T-cell (primary cell): ENCODE measurements at regions of chr3 and their contacts with region 1.

Region 1: GRCh38 chr3:113002679-113003078 is 11.9 kb downstream of the GTPBP8 start:
- DNase-seq: peak in 25 of 35 experiments; percentile 16 to 60 (median 35)
- ATAC-seq: peak; percentile 40 to 76 (median 70)
- H3K4me3 ChIP-seq: no peak overlapping the region
- H3K4me3 Mint-ChIP-seq: peak overlapping the region in 1 of 3 donors; percentile 19
- H3K27ac ChIP-seq: peak overlapping the region; percentile 61
- H3K27ac Mint-ChIP-seq: peak overlapping the region; percentile 81 to 88
- H3K4me1 ChIP-seq: peaks cover 22 to 65% of the 10 kb centered on the region in 2 experiments
- H3K4me1 Mint-ChIP-seq: peaks cover 76 to 82% (median 79%) of the 10 kb centered on the region in 3 donors
- H3K27me3 ChIP-seq: no peaks in the 10 kb centered on the region
- H3K27me3 Mint-ChIP-seq: no peaks in the 10 kb centered on the region

Region 2: DNA sequence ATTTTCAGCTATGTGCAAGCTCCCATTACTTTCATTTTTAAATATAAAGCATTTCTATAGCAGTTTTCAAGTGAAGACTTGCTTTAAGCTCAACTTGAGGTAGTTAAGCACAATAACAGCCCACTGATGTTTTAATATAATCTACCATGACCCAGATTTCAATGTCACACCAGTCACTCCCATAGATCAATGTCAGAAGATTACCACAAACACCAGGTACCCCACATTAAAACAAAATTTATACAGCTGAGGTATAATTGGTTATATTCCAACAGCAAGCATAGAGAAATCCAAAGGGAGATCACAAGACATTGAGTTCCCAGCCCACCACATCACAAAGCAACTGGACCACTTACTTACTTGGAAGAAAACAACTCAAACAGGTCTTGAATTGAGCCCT is 10.9 kb after region 1 on chr3:
- CTCF ChIA-PET with region 1: interaction called in 1 of 2 experiments, 14 read pairs
- POLR2A ChIA-PET with region 1: interaction called, 9 to 21 read pairs
- DNase-seq: no peak
- ATAC-seq: peak in 1 of 4 experiments; percentile 38
- H3K4me3 ChIP-seq: no peak overlapping the region
- H3K4me3 Mint-ChIP-seq: peak overlapping the region in 2 of 3 donors; percentile 6 to 16
- H3K27ac ChIP-seq: peak overlapping the region; percentile 1
- H3K27ac Mint-ChIP-seq: peak overlapping the region; percentile 43 to 82
- H3K4me1 ChIP-seq: peaks cover 5 to 17% of the 10 kb centered on the region in 2 experiments
- H3K4me1 Mint-ChIP-seq: peaks cover 85 to 88% (median 87%) of the 10 kb centered on the region in 3 donors
- H3K27me3 ChIP-seq: no peaks in the 10 kb centered on the region
- H3K27me3 Mint-ChIP-seq: no peaks in the 10 kb centered on the region

Region 3: DNA sequence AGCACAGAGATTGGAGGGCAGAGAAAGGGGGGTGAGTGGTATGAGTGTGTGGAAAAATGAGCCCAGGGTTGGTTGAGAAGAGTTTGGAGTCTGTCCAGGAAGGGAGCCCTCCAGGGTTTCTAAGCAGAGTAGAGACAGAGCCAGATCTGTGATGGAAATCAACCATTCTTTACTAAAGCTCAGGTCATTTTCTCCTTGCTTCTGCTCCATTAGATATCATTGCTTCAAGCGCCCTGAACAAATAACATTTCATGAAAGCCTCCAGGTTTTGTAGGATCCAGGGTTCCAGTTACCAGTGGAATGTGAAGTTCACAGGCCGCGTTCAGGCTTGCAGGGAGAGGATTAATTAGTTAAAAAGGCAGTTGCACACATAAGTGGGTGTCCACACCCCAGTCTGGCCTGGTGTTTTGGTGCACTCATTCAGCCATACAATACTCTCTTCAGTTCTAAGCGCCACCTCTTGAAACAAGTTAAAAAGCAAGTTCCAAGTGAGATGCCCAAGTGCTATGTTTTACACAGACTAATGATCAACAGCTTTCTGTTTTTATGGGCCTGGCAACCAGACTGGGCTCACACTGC is 192.2 kb after region 1 on chr3:
- CTCF ChIA-PET with region 1: no interaction called
- POLR2A ChIA-PET with region 1: interaction called in 1 of 2 experiments, 11 read pairs
- DNase-seq: no peak
- ATAC-seq: no peak
- H3K4me3 ChIP-seq: no peak overlapping the region
- H3K4me3 Mint-ChIP-seq: no peak overlapping the region
- H3K27ac ChIP-seq: no peak overlapping the region
- H3K27ac Mint-ChIP-seq: no peak overlapping the region
- H3K4me1 ChIP-seq: no peaks in the 10 kb centered on the region
- H3K4me1 Mint-ChIP-seq: no peaks in the 10 kb centered on the region
- H3K27me3 ChIP-seq: no peaks in the 10 kb centered on the region
- H3K27me3 Mint-ChIP-seq: peaks cover 2 to 16% of the 10 kb centered on the region in 2 donors

Region 4: DNA sequence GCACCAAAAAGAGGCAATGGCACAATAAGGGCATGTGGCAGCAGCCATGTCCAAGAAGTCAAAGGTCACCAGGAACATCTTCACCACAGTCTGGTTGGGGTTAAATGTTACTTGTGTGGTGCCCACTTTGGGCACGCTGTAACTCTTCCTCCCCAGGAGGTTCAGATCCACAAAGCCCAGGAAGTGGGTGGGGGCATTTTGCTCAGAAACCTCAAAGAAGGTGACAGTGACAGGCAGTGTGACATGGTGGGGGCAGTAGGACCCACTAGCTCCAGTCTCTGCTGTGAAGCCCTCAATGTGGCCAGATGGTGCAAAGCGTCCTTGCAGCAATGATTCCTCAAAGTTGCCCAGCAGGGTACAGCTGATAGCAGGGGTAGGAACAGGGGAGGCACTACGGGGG is 1228.9 kb after region 1 on chr3:
- CTCF ChIA-PET with region 1: no interaction called
- POLR2A ChIA-PET with region 1: no interaction called
- DNase-seq: peak; percentile 32 to 74 (median 54)
- ATAC-seq: peak; percentile 78 to 90 (median 88)
- H3K4me3 ChIP-seq: no peak overlapping the region
- H3K4me3 Mint-ChIP-seq: peak overlapping the region; percentile 46 to 64 (median 55)
- H3K27ac ChIP-seq: peak overlapping the region; percentile 76
- H3K27ac Mint-ChIP-seq: peak overlapping the region; percentile 93 to 95
- H3K4me1 ChIP-seq: peaks cover 10 to 59% of the 10 kb centered on the region in 2 experiments
- H3K4me1 Mint-ChIP-seq: peaks cover 77 to 90% (median 89%) of the 10 kb centered on the region in 3 donors
- H3K27me3 ChIP-seq: no peaks in the 10 kb centered on the region
- H3K27me3 Mint-ChIP-seq: no peaks in the 10 kb centered on the region